ENCODE measurements at regions of chr1 and their contacts with region 1.

Region 1: GRCh38 chr1:101136739-101137138 is 100.1 kb upstream of the S1PR1 start:
- DNase-seq: peak; percentile 61
- H3K4me3 Mint-ChIP-seq: no peak overlapping the region
- H3K27ac Mint-ChIP-seq: peak overlapping the region; percentile 62
- H3K4me1 Mint-ChIP-seq: peaks cover 67% of the 10 kb centered on the region
- H3K27me3 Mint-ChIP-seq: no peaks in the 10 kb centered on the region

Region 2: GRCh38 chr1:100928128-100928527 is 208.6 kb before region 1 on chr1:
- CTCF ChIA-PET with region 1: no interaction called
- intact Hi-C with region 1: loop called (anchors 2 kb)
- DNase-seq: peak; percentile 49
- H3K4me3 Mint-ChIP-seq: no peak overlapping the region
- H3K27ac Mint-ChIP-seq: no peak overlapping the region
- H3K4me1 Mint-ChIP-seq: peaks cover 30% of the 10 kb centered on the region
- H3K27me3 Mint-ChIP-seq: no peaks in the 10 kb centered on the region

Region 3: DNA sequence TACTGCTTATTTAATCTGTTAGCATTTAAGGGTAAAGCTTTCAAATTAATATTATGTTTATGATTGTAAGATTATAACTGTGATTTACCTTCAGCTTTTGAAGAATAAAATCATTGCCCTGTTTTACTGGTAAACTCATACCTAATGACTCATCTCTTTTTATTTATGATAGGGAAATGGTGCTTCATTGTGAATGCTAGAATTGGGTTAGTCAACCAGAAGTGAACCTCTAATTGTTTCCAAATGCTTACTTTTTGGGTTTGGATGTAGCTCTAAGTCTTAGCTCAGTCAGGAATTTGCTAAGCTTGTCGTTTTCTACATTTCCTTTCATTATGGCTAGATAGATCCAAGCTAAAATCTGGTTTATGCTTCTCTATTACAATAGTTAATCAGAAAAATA is 181.4 kb before region 1 on chr1:
- CTCF ChIA-PET with region 1: no interaction called
- intact Hi-C with region 1: no loop called
- DNase-seq: no peak
- H3K4me3 Mint-ChIP-seq: no peak overlapping the region
- H3K27ac Mint-ChIP-seq: peak overlapping the region; percentile 65
- H3K4me1 Mint-ChIP-seq: peaks cover 62% of the 10 kb centered on the region
- H3K27me3 Mint-ChIP-seq: no peaks in the 10 kb centered on the region

Region 4: GRCh38 chr1:101122452-101123166 is 14.1 kb before region 1 on chr1:
- CTCF ChIA-PET with region 1: interaction called, 12 read pairs
- intact Hi-C with region 1: no loop called
- DNase-seq: peak; percentile 35
- H3K4me3 Mint-ChIP-seq: no peak overlapping the region
- H3K27ac Mint-ChIP-seq: no peak overlapping the region
- H3K4me1 Mint-ChIP-seq: peaks cover 51% of the 10 kb centered on the region
- H3K27me3 Mint-ChIP-seq: no peaks in the 10 kb centered on the region

Region 5: DNA sequence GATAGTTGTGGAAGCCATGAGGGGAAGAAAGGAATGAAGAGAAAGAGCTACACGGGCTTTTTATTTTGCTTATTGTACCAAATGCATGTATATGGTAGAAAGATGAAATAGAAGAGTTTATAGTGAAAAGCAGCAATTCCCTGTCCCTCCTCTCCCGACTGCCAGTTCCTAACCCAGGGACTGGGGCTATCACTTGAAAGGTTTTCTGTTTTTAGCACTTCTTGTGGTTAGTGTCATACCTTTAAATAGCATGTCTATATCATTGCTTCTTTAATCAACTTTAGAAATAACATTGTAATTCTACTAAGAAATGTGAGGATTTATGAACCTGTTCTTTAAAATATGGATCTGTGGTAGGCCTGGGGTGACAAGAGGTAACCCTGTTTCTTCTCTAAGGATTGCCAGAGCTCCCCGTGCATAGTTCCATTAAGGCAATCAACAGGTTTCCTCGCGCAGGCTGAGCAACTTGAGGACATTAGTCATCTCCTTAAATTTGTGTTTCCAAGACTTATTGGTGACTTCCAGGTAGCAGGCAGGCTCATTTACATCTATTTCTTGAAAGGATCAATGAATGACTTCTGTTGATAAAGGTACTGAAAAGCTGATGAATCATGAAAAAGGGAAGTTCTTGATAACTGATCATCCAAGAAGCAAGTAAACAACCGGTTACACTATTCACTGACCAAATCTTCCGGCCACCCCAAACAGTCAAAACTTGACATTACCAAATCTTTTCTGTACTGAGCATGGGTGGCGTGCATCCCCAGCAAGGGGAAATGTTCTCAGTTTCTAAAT is 62.3 kb after region 1 on chr1:
- CTCF ChIA-PET with region 1: interaction called, 3 read pairs
- intact Hi-C with region 1: loop called (anchors 1 kb)
- DNase-seq: peak; percentile 82
- H3K4me3 Mint-ChIP-seq: no peak overlapping the region
- H3K27ac Mint-ChIP-seq: peak overlapping the region; percentile 79
- H3K4me1 Mint-ChIP-seq: peaks cover 28% of the 10 kb centered on the region
- H3K27me3 Mint-ChIP-seq: no peaks in the 10 kb centered on the region

Region 6: DNA sequence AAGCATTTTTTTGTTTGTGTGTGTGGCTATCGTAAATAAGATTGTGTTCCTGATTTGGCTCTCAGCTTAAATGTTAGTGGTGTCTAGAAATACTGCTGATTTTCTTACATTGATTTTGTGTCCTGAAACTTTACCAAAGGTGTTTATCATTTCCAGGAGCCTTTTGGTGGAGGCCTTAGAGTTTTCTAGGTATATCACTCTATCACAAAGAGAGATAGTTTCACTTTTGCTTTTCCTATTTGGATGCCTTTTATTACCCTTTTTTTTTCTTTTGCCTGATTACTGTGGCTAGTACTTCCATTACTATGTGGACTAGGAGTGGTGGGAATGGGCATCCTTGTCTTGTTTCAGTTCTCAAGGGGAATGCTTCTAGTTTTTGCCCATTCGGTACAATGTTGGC is 209.7 kb after region 1 on chr1:
- CTCF ChIA-PET with region 1: no interaction called
- intact Hi-C with region 1: loop called (anchors 2 kb)
- DNase-seq: no peak
- H3K4me3 Mint-ChIP-seq: no peak overlapping the region
- H3K27ac Mint-ChIP-seq: no peak overlapping the region
- H3K4me1 Mint-ChIP-seq: peaks cover 28% of the 10 kb centered on the region
- H3K27me3 Mint-ChIP-seq: no peaks in the 10 kb centered on the region

Measured in activated naive CD4-positive, alpha-beta T cell treated with anti-CD3 and anti-CD28 coated beads for 36 hours (primary cell).